Mammary epithelial cell (primary cell): ENCODE measurements at regions of chr1 and their contacts with region 1.

Region 1: DNA sequence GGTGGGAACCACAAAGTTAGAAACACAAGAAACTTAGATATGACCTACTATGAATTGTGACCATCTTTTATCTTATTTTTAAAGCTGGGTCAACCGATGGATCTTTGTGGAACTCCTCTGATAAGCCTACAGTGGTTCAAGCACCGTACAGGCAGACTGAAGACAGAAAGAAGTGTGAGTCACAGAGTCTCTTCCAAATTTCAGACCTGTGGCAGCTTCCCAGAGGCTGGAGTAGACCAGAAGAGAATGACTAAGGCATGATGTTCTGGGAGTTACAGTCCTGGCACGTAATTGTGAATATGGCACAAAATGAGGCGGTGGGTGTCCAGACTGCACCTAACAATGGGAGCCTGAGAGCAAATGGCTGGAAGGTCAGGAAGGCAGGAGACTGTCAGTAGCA is 70.0 kb downstream of the LMO4 start:
- DNase-seq: peak; percentile 87
- H3K4me3 ChIP-seq: peak overlapping the region in 1 of 3 experiments; percentile 2
- H3K27ac ChIP-seq: peak overlapping the region; percentile 89
- H3K4me1 ChIP-seq: peaks cover 23% of the 10 kb centered on the region
- H3K27me3 ChIP-seq: no peaks in the 10 kb centered on the region
- CTCF ChIP-seq: no peak

Region 2: GRCh38 chr1:87335175-87335884 is 63.3 kb before region 1 on chr1:
- CTCF ChIA-PET with region 1: no interaction called
- dilution Hi-C with region 1: no loop called
- in situ Hi-C with region 1: loop called in 1 of 2 experiments (anchors 5 kb)
- intact Hi-C with region 1: loop called (anchors 2 kb)
- DNase-seq: peak; percentile 42
- H3K4me3 ChIP-seq: peak overlapping the region; percentile 40 to 72 (median 47)
- H3K27ac ChIP-seq: peak overlapping the region; percentile 29
- H3K4me1 ChIP-seq: peaks cover 27% of the 10 kb centered on the region
- H3K27me3 ChIP-seq: no peaks in the 10 kb centered on the region
- CTCF ChIP-seq: peak in 1 of 2 donors; percentile 3

Region 3: DNA sequence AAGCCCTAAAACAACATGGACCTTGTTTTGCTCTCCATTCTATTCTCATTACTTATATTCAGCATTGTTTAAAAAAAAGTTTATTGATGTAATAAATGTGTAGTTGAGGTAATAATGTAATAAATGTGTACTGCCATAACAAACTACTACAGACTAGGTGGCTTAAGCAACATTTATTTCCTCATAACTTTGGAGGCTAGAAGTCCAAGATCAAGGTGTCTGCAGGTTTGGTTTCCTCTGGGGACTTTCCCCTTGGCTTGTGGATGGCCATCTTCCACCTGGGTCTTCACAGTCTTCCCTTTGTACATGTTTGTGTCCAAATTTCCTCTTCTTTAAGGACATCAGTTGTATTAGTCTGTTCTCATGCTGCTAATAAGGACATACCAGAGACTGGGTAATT is 23.2 kb after region 1 on chr1:
- CTCF ChIA-PET with region 1: no interaction called
- dilution Hi-C with region 1: no loop called
- in situ Hi-C with region 1: no loop called
- intact Hi-C with region 1: loop called (anchors 2 kb)
- DNase-seq: no peak
- H3K4me3 ChIP-seq: no peak overlapping the region
- H3K27ac ChIP-seq: no peak overlapping the region
- H3K4me1 ChIP-seq: peaks cover 4% of the 10 kb centered on the region
- H3K27me3 ChIP-seq: no peaks in the 10 kb centered on the region
- CTCF ChIP-seq: no peak